ENCODE measurements at regions of chr21 and their contacts with region 1.

Region 1: DNA sequence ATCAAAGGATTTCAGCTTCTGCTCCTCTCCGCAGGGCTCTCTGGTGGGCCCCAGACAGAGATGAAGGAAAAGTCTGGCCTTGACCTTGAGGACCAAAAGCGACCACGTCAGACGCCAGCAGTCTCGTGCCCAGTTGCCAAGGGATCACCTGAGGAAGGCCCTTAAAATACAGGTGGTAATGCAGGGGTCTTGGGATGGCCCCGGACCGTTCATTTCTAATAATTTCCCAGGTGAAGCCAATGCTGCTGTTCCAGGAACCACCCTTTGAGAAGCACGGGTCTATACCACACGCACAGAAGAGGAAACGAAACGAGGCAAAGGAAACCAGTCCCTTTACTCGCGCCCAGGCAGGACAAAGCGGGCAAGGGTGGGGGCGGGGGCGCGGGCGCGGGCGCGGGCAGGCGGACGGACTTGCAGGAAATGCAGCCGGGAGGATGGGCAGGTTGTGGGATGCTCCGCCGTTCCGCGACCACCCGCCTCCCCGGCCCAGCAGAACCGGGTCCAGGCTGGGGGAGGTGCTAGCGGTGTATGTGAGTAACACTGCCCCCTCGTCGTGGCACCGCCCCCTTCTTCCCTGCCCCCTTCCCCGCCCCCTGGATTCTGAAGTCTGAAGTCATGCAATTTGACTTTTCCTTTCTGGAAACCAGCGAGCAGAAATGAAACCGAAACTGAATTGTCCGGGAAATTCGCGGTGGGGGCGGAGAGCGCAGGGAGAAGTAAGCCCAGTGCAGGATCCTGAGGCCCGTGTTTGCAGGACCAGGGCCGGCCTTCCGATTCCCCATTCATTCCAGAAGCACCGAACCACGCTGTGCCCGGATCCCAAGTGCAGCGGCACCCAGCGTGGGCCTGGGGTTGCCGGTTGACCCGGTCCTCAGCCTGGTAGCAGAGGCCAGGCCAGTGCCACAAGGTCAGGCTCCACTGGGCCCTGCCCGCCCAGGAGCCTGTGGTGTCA is 5.9 kb upstream of the MX1 start:
- DNase-seq: peak; percentile 69
- ATAC-seq: peak; percentile 85
- H3K4me3 ChIP-seq: peak overlapping the region; percentile 79 to 87 (median 82)
- H3K27ac ChIP-seq: peak overlapping the region; percentile 47
- H3K4me1 ChIP-seq: peaks cover 12% of the 10 kb centered on the region
- H3K27me3 ChIP-seq: no peaks in the 10 kb centered on the region; a peak in 1 of 5 replicates
- CTCF ChIP-seq: no peak
- EP300 ChIP-seq: no peak; a peak in 1 of 4 replicates
- POLR2A ChIP-seq: peak in 1 of 2 experiments; percentile 41; a peak in 1 of 4 replicates
- RAD21 ChIP-seq: no peak; the same call in 1 of the 2 replicates

Region 2: DNA sequence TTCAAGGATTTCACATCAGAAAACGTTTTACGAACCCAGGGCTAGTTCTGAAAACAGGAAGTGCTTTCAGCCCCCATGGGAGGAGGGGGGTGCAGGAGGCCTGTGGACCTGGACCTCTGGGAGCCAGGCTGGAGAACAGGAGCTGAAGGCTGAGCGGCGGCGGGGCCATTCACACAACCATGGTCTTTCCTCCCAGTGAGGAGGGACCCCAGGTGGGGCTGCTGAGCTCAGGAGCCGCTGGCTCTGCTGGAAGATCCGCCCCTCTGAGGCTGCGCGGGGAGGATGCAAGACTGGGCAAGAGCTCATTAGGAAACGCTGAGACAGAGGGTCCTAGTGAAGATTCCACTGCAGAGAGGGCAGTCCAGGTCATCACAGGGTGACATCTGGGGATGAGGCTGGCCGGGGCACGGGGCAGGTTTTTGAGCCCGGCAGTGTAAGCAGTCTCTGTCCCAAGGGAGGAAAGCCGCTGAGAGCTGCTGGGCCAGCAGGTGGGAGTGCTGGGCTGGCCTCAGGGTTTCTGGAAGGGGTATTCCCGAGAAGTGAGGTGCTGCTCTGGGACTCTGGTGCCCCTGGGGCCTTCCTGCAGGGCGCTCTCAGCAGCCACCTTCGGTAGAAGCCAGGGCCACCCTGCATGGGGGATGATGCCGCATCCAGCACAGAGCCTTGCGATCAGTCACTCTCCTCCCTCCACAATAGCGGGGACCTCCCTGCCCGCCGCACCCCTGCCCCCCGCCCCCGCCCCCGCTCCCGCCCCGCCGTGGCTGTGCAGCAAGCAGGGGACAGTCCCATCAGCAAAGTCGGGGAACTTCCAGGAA is 50.9 kb before region 1 on chr21:
- CTCF ChIA-PET with region 1: no interaction called
- POLR2A ChIA-PET with region 1: interaction called, 8 read pairs
- in situ Hi-C with region 1: no loop called
- intact Hi-C with region 1: loop called (anchors 5 kb)
- DNase-seq: peak; percentile 40
- ATAC-seq: peak; percentile 76
- H3K4me3 ChIP-seq: peak overlapping the region; percentile 57 to 73 (median 67); a peak in 5 of 6 replicates
- H3K27ac ChIP-seq: peak overlapping the region; percentile 68
- H3K4me1 ChIP-seq: peaks cover 56% of the 10 kb centered on the region
- H3K27me3 ChIP-seq: no peaks in the 10 kb centered on the region; a peak in 1 of 5 replicates
- CTCF ChIP-seq: peak; percentile 52
- EP300 ChIP-seq: no peak
- POLR2A ChIP-seq: no peak; a peak in 1 of 4 replicates
- RAD21 ChIP-seq: peak; percentile 30